Aorta (tissue), 5 donors: ENCODE measurements at regions of chr17 and their contacts with region 1.

Region 1: GRCh38 chr17:39668199-39668966 is at the start of gene PNMT:
- DNase-seq: peak; percentile 80 to 93
- ATAC-seq: no peak
- H3K4me3 ChIP-seq: no peak within 1 kb of the TSS
- H3K27ac ChIP-seq: peak within 1 kb of the TSS in 1 of 2 donors; percentile 15
- H3K4me1 ChIP-seq: no peaks in the 10 kb centered on the region
- H3K27me3 ChIP-seq: no peaks in the 10 kb centered on the region
- total RNA-seq, gene PNMT: 0.75 to 1.5 TPM

Region 2: GRCh38 chr17:39402244-39402889 is 266.0 kb before region 1 on chr17:
- intact Hi-C with region 1: no loop called
- DNase-seq: peak; percentile 94 to 97
- ATAC-seq: peak; percentile 93
- H3K4me3 ChIP-seq: peak overlapping the region; percentile 96 to 98
- H3K27ac ChIP-seq: no peak overlapping the region
- H3K4me1 ChIP-seq: no peaks in the 10 kb centered on the region
- H3K27me3 ChIP-seq: no peaks in the 10 kb centered on the region

Region 3: DNA sequence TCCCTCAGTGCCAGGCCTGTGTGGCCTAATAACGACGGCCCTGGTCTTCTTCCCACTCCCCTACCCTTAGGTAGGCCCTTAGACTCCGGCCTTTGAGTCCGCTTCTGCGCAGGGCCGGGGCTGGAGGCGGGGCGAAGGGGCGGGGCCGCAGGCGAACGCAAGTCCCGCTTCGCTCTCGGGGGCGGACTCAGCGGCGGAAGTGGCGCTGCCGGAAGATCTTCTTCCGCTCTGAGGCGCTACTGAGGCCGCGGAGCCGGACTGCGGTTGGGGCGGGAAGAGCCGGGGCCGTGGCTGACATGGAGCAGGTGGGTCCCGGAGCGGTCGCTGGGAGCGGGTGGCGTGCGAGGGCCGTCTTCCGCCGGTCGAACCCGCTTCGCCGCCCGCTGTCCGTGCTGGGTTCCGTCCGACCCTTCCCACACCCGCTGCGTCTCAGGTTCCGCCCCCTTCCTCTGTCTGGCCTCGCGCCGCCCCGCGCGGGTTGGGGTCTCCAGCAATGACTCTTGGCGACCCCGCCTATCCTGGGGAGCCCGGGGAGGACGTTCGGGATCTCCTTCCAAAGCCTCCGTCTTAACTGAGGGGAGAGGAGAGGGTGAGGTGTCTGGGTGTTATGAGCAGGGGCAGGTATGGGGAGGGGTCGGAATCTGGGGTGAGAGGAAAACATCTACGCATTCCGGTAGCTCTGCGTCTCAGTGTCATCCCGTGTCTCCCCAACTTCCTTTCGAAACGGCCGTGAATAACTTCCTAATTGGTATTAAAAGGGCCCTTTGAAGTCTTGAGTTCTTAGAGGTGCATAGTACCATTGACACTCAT is 31.3 kb before region 1 on chr17 and contains the start of gene STARD3:
- intact Hi-C with region 1: loop called in 1 of 2 experiments (anchors 5 kb)
- DNase-seq: peak; percentile 96 to 98
- ATAC-seq: peak; percentile 94
- H3K4me3 ChIP-seq: peak within 1 kb of the TSS; percentile 78 to 91
- H3K27ac ChIP-seq: peak within 1 kb of the TSS in 1 of 2 donors; percentile 55
- H3K4me1 ChIP-seq: no peaks in the 10 kb centered on the region
- H3K27me3 ChIP-seq: no peaks in the 10 kb centered on the region
- total RNA-seq, gene STARD3: 34.7 to 58.1 TPM

Region 4: DNA sequence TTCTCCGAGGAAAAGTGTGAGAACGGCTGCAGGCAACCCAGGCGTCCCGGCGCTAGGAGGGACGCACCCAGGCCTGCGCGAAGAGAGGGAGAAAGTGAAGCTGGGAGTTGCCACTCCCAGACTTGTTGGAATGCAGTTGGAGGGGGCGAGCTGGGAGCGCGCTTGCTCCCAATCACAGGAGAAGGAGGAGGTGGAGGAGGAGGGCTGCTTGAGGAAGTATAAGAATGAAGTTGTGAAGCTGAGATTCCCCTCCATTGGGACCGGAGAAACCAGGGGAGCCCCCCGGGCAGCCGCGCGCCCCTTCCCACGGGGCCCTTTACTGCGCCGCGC is 31.4 kb after region 1 on chr17 and contains the start of gene ERBB2:
- intact Hi-C with region 1: loop called (anchors 5 kb)
- DNase-seq: peak; percentile 79 to 88
- ATAC-seq: peak; percentile 88
- H3K4me3 ChIP-seq: peak within 1 kb of the TSS; percentile 95 to 96
- H3K27ac ChIP-seq: peak within 1 kb of the TSS; percentile 88 to 91
- H3K4me1 ChIP-seq: no peaks in the 10 kb centered on the region
- H3K27me3 ChIP-seq: no peaks in the 10 kb centered on the region
- total RNA-seq, gene ERBB2: 73.0 to 74.0 TPM